ENCODE measurements at regions of chr2 and their contacts with region 1.

Region 1: GRCh38 chr2:45879406-45879805 is 227.9 kb downstream of the PRKCE start:
- DNase-seq: no peak
- CTCF ChIP-seq: peak; percentile 3

Region 2: GRCh38 chr2:45691171-45691999 is 188.0 kb before region 1 on chr2:
- CTCF ChIA-PET with region 1: no interaction called
- POLR2A ChIA-PET with region 1: no interaction called
- DNase-seq: peak; percentile 38
- CTCF ChIP-seq: no peak

Region 3: GRCh38 chr2:45869165-45869501 is 10.3 kb before region 1 on chr2:
- CTCF ChIA-PET with region 1: interaction called, 16 read pairs
- POLR2A ChIA-PET with region 1: no interaction called
- DNase-seq: no peak
- CTCF ChIP-seq: no peak

Region 4: DNA sequence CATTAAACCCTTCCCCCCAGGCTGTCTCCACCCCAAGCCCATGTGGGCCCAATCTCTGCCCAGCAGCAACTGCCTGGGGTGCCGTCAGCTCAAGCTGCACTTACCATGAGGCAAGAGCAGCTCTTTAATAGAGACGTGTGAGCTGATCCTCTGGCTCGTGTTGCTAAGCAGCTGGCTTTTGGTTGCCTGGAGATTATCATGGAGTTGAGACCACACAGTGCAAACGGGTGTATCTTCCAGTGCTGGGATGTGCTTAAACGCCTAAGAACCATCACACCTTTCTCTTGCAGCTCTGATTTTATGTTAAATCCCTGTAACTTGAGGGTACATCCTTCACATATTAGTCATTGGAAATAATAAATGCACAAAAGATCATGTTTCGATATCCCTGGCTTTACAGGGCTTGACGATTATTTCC is 43.2 kb after region 1 on chr2:
- CTCF ChIA-PET with region 1: no interaction called
- POLR2A ChIA-PET with region 1: no interaction called
- DNase-seq: no peak
- CTCF ChIP-seq: no peak